Activated CD4-positive, alpha-beta T cell treated with anti-CD3 and anti-CD28 coated beads for 36 hours (primary cell): ENCODE measurements at regions of chr1 and their contacts with region 1.

Region 1: DNA sequence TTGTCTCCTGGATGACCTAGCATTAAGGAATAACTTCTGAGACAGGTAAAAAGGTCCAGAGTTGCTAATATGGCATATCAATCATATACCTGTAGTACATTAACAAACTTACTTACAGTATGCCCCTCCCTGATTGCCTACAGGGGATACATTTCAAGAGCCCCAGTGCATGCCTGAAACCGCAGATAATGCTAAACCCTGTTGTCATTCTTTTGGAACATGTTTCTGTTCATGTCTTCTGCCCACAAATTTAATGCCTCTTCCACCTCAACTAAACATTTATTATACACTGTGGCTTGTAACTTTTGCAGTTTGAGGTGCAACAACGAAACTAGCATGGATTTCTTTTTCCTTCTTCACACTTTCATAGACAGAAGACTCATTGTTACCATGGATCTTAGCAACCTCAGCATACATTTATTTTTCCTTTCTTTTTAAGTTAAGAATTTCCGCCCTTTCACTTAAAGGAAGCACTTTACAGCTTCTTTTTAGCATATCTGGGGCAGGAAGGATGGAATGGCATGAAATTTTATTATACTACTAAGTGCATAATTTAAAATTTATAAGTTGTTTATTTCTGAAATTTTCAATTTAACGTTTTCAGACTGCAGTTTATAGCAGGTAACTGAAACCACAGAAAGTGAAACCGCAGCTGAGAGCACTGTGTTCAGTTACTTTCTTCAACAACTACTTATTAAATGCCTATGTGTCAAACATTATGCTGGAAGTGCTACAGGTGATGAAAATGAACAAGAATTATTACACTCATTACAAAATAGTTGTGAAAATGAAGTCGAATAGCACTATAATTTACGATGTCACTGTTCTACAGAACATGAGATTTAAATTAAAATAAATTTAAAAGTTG is 25.3 kb downstream of the F13B start:
- DNase-seq: no peak
- ATAC-seq: no peak
- H3K4me3 Mint-ChIP-seq: no peak overlapping the region
- H3K27ac Mint-ChIP-seq: no peak overlapping the region
- H3K4me1 Mint-ChIP-seq: peaks cover 2% of the 10 kb centered on the region
- H3K27me3 Mint-ChIP-seq: peaks cover 23% of the 10 kb centered on the region

Region 2: GRCh38 chr1:197011614-197012013 is 30.1 kb before region 1 on chr1:
- CTCF ChIA-PET with region 1: interaction called, 3 read pairs
- POLR2A ChIA-PET with region 1: no interaction called
- intact Hi-C with region 1: loop called in 1 of 2 experiments (anchors 1 kb)
- DNase-seq: no peak
- ATAC-seq: no peak
- H3K4me3 Mint-ChIP-seq: no peak overlapping the region
- H3K27ac Mint-ChIP-seq: no peak overlapping the region
- H3K4me1 Mint-ChIP-seq: no peaks in the 10 kb centered on the region
- H3K27me3 Mint-ChIP-seq: no peaks in the 10 kb centered on the region